Caco-2 (cell line): ENCODE measurements at regions of chr3 and their contacts with region 1.

Region 1: GRCh38 chr3:57100046-57100695 is 39.7 kb downstream of the SPATA12 start:
- DNase-seq: peak; percentile 61 to 81
- H3K4me3 ChIP-seq: no peak overlapping the region
- H3K4me3 Mint-ChIP-seq: no peak overlapping the region
- H3K27ac Mint-ChIP-seq: no peak overlapping the region
- H3K4me1 ChIP-seq: 0 out of 2 replicates have a peak, but pooled peaks cover 7% of the 10 kb centered on the region
- H3K4me1 Mint-ChIP-seq: peaks cover 10% of the 10 kb centered on the region
- H3K27me3 ChIP-seq: no peaks in the 10 kb centered on the region
- H3K27me3 Mint-ChIP-seq: no peaks in the 10 kb centered on the region
- CTCF ChIP-seq: peak; percentile 65 to 89

Region 2: GRCh38 chr3:57160767-57161538 is 60.8 kb after region 1 on chr3:
- CTCF ChIA-PET with region 1: no interaction called
- POLR2A ChIA-PET with region 1: no interaction called
- intact Hi-C with region 1: loop called (anchors 2 kb)
- DNase-seq: no peak
- H3K4me3 ChIP-seq: no peak overlapping the region
- H3K4me3 Mint-ChIP-seq: no peak overlapping the region
- H3K27ac Mint-ChIP-seq: no peak overlapping the region
- H3K4me1 ChIP-seq: 0 out of 2 replicates have a peak, but pooled peaks cover 6% of the 10 kb centered on the region
- H3K4me1 Mint-ChIP-seq: peaks cover 10% of the 10 kb centered on the region
- H3K27me3 ChIP-seq: no peaks in the 10 kb centered on the region
- H3K27me3 Mint-ChIP-seq: no peaks in the 10 kb centered on the region
- CTCF ChIP-seq: no peak

Region 3: GRCh38 chr3:57234613-57235575 is 134.7 kb after region 1 on chr3:
- CTCF ChIA-PET with region 1: no interaction called
- POLR2A ChIA-PET with region 1: no interaction called
- intact Hi-C with region 1: no loop called
- DNase-seq: no peak
- H3K4me3 ChIP-seq: no peak overlapping the region
- H3K4me3 Mint-ChIP-seq: no peak overlapping the region
- H3K27ac Mint-ChIP-seq: no peak overlapping the region
- H3K4me1 ChIP-seq: no peaks in the 10 kb centered on the region
- H3K4me1 Mint-ChIP-seq: no peaks in the 10 kb centered on the region
- H3K27me3 ChIP-seq: no peaks in the 10 kb centered on the region
- H3K27me3 Mint-ChIP-seq: no peaks in the 10 kb centered on the region
- CTCF ChIP-seq: no peak